Stomach (tissue), 19 donors: ENCODE measurements at regions of chr13 and their contacts with region 1.

Region 1: GRCh38 chr13:84896128-84896527 is 903.1 kb downstream of the SLITRK6 start:
- DNase-seq: peak in 1 of 2 donors; percentile 86
- H3K4me3 ChIP-seq: no peak overlapping the region
- H3K27ac ChIP-seq: no peak overlapping the region
- H3K4me1 ChIP-seq: no peaks in the 10 kb centered on the region
- H3K27me3 ChIP-seq: no peaks in the 10 kb centered on the region
- CTCF ChIP-seq: peak in 4 of 7 experiments; percentile 37 to 57 (median 46)
- EP300 ChIP-seq: no peak
- POLR2A ChIP-seq: no peak

Region 2: GRCh38 chr13:85828149-85828548 is 932.0 kb after region 1 on chr13:
- intact Hi-C with region 1: loop called (anchors 10 kb)
- DNase-seq: peak in 1 of 2 donors; percentile 41
- H3K4me3 ChIP-seq: no peak overlapping the region
- H3K27ac ChIP-seq: no peak overlapping the region
- H3K4me1 ChIP-seq: no peaks in the 10 kb centered on the region
- H3K27me3 ChIP-seq: no peaks in the 10 kb centered on the region
- CTCF ChIP-seq: peak in 4 of 7 experiments; percentile 18 to 59 (median 43)
- EP300 ChIP-seq: no peak
- POLR2A ChIP-seq: no peak

Region 3: GRCh38 chr13:85930108-85930507 is 1034.0 kb after region 1 on chr13:
- intact Hi-C with region 1: no loop called
- DNase-seq: no peak
- H3K4me3 ChIP-seq: no peak overlapping the region
- H3K27ac ChIP-seq: no peak overlapping the region
- H3K4me1 ChIP-seq: no peaks in the 10 kb centered on the region
- H3K27me3 ChIP-seq: no peaks in the 10 kb centered on the region
- CTCF ChIP-seq: no peak
- EP300 ChIP-seq: no peak
- POLR2A ChIP-seq: no peak